ENCODE measurements at regions of chr10 and their contacts with region 1.

Region 1: GRCh38 chr10:93074147-93074596 is 479 bp downstream of the CYP26A1 start:
- DNase-seq: peak in 1 of 9 donors; percentile 28
- ATAC-seq: no peak
- H3K4me3 ChIP-seq: no peak overlapping the region
- H3K4me3 Mint-ChIP-seq: peak overlapping the region in 9 of 10 donors; percentile 14 to 82 (median 58)
- H3K27ac ChIP-seq: no peak overlapping the region
- H3K27ac Mint-ChIP-seq: peak overlapping the region in 1 of 9 donors; percentile 62
- H3K4me1 ChIP-seq: no peaks in the 10 kb centered on the region
- H3K4me1 Mint-ChIP-seq: peaks cover 9 to 39% (median 19%) of the 10 kb centered on the region in 7 donors
- H3K27me3 ChIP-seq: peaks cover 0 to 7% of the 10 kb centered on the region in 2 donors
- H3K27me3 Mint-ChIP-seq: peaks cover 58 to 88% (median 65%) of the 10 kb centered on the region in 5 donors

Region 2: GRCh38 chr10:92689663-92690210 is 384.4 kb before region 1 on chr10 and contains the start of gene HHEX:
- CTCF ChIA-PET with region 1: no interaction called
- POLR2A ChIA-PET with region 1: no interaction called
- intact Hi-C with region 1: loop called in 1 of 2 experiments (anchors 5 kb)
- DNase-seq: peak in 3 of 9 donors; percentile 19 to 50 (median 39)
- ATAC-seq: peak; percentile 82
- H3K4me3 ChIP-seq: peak within 1 kb of the TSS; percentile 37
- H3K4me3 Mint-ChIP-seq: peak within 1 kb of the TSS; percentile 73 to 90 (median 82)
- H3K27ac ChIP-seq: no peak within 1 kb of the TSS
- H3K27ac Mint-ChIP-seq: no peak within 1 kb of the TSS
- H3K4me1 ChIP-seq: peaks cover 0 to 29% of the 10 kb centered on the region in 2 donors
- H3K4me1 Mint-ChIP-seq: peaks cover 16 to 31% (median 27%) of the 10 kb centered on the region in 7 donors
- H3K27me3 ChIP-seq: peaks cover 10 to 26% of the 10 kb centered on the region in 2 donors
- H3K27me3 Mint-ChIP-seq: peaks cover 40 to 88% (median 75%) of the 10 kb centered on the region in 5 donors
- total RNA-seq, gene HHEX: 0.27 to 21.4 (median 5.5) TPM in 3 of 5 experiments, not detected in the others

Region 3: GRCh38 chr10:92886334-92886961 is 187.7 kb before region 1 on chr10:
- CTCF ChIA-PET with region 1: interaction called, 3 read pairs
- POLR2A ChIA-PET with region 1: no interaction called
- intact Hi-C with region 1: loop called in 1 of 2 experiments (anchors 5 kb)
- DNase-seq: no peak
- ATAC-seq: no peak
- H3K4me3 ChIP-seq: no peak overlapping the region
- H3K4me3 Mint-ChIP-seq: no peak overlapping the region
- H3K27ac ChIP-seq: no peak overlapping the region
- H3K27ac Mint-ChIP-seq: no peak overlapping the region
- H3K4me1 ChIP-seq: no peaks in the 10 kb centered on the region
- H3K4me1 Mint-ChIP-seq: peaks cover 0 to 13% (median 8%) of the 10 kb centered on the region in 7 donors
- H3K27me3 ChIP-seq: no peaks in the 10 kb centered on the region
- H3K27me3 Mint-ChIP-seq: peaks cover 0 to 2% (median 0%) of the 10 kb centered on the region in 5 donors

Region 4: DNA sequence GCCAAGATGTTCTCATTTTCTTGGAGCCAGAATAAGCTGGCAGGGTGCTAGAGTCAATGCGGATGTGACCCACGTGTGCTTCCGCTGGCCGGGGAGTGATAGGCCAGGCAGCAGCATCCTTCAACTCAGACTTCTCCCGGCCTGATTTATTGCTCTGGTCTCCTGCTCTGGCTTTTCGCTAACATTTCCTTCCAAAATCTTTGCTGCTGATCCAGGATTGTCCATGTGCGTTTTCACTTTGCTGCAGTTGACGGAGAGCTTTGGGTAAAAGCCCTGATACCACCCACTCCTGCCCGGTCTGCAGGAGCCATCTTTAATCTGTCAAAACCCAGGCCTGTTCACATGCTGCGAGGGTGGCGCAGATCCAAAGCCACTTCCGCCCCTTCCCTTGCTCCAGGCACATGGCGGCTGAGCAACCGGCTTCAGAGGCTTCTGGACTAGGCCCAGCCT is 106.3 kb after region 1 on chr10:
- CTCF ChIA-PET with region 1: no interaction called
- POLR2A ChIA-PET with region 1: no interaction called
- intact Hi-C with region 1: no loop called
- DNase-seq: no peak
- ATAC-seq: no peak
- H3K4me3 ChIP-seq: no peak overlapping the region
- H3K4me3 Mint-ChIP-seq: no peak overlapping the region
- H3K27ac ChIP-seq: no peak overlapping the region
- H3K27ac Mint-ChIP-seq: no peak overlapping the region
- H3K4me1 ChIP-seq: no peaks in the 10 kb centered on the region
- H3K4me1 Mint-ChIP-seq: peaks cover 0 to 2% (median 0%) of the 10 kb centered on the region in 7 donors
- H3K27me3 ChIP-seq: no peaks in the 10 kb centered on the region
- H3K27me3 Mint-ChIP-seq: peaks cover 0 to 13% (median 4%) of the 10 kb centered on the region in 5 donors

Region 5: DNA sequence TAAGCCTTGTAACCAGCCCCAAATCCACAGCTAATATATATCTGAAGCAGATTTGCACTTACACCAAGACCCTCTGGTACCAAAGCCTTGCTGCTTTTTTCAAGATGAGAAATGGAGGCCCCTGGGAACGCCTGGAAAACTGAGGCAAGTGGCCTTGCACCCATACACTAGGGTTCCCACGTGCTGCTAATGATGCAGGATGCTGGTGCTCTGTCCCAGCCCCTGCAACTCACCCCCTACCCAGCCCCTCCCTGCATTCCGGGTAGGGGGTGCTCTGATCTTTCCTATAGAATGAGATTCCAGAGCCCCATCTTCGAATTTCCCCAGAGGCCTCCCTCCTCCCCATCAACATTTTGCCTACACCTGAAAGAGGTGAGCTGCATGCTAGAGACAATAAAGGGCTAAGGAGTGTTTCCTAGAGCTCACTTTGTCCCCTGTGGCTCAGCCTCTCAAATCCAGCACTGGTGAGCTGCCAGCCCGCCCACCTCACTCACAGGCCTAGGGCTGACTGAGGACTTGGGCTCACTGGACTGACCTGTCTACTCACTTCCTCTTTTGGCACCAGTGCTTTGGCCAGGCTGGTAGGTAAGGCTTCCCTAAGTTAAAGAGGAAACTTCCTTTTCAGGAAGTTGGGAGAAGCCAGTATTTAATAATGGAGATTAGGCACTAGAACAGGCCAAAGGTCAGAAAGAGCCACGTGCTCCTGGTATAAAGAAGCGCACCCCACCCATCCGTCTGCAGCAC is 517.1 kb after region 1 on chr10:
- CTCF ChIA-PET with region 1: no interaction called
- POLR2A ChIA-PET with region 1: no interaction called
- intact Hi-C with region 1: no loop called
- DNase-seq: no peak
- ATAC-seq: no peak
- H3K4me3 ChIP-seq: no peak overlapping the region
- H3K4me3 Mint-ChIP-seq: no peak overlapping the region
- H3K27ac ChIP-seq: no peak overlapping the region
- H3K27ac Mint-ChIP-seq: no peak overlapping the region
- H3K4me1 ChIP-seq: no peaks in the 10 kb centered on the region
- H3K4me1 Mint-ChIP-seq: no peaks in the 10 kb centered on the region
- H3K27me3 ChIP-seq: no peaks in the 10 kb centered on the region
- H3K27me3 Mint-ChIP-seq: peaks cover 0 to 18% (median 4%) of the 10 kb centered on the region in 5 donors